ENCODE measurements at regions of chr6 and their contacts with region 1.

Region 1: DNA sequence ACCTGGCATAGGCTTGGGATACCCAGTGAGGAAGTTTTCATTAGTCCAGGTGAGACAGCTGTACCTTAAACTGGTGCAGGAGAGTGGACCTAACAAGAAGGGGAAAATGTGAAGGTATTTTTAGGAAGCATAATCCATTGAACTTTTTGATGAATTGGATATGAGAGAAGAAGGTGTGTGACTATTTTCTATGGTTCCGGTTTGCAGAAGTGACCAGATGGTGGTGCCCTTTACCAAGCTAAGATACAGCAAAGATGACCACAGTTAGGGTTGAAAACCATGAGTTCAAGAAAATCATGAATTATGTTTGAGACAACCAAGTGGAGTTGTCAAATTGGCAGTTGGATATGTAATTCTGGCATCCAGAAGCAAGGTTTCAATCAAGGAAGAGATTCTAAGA is 61.9 kb upstream of the NRSN1 start:
- DNase-seq: no peak
- H3K4me3 ChIP-seq: no peak overlapping the region
- H3K27ac ChIP-seq: peak overlapping the region in 1 of 2 donors; percentile 61
- H3K4me1 ChIP-seq: no peaks in the 10 kb centered on the region
- H3K27me3 ChIP-seq: no peaks in the 10 kb centered on the region
- CTCF ChIP-seq: peak in 2 of 3 experiments; percentile 5 to 6

Region 2: GRCh38 chr6:23964865-23965264 is 99.2 kb before region 1 on chr6:
- intact Hi-C with region 1: no loop called
- DNase-seq: no peak
- H3K4me3 ChIP-seq: no peak overlapping the region
- H3K27ac ChIP-seq: no peak overlapping the region
- H3K4me1 ChIP-seq: no peaks in the 10 kb centered on the region
- H3K27me3 ChIP-seq: no peaks in the 10 kb centered on the region
- CTCF ChIP-seq: no peak

Region 3: GRCh38 chr6:24004103-24005064 is 59.7 kb before region 1 on chr6:
- intact Hi-C with region 1: no loop called
- DNase-seq: peak; percentile 9 to 85
- H3K4me3 ChIP-seq: no peak overlapping the region
- H3K27ac ChIP-seq: peak overlapping the region; percentile 77 to 81
- H3K4me1 ChIP-seq: peaks cover 0 to 14% of the 10 kb centered on the region in 2 donors
- H3K27me3 ChIP-seq: no peaks in the 10 kb centered on the region
- CTCF ChIP-seq: no peak

Region 4: DNA sequence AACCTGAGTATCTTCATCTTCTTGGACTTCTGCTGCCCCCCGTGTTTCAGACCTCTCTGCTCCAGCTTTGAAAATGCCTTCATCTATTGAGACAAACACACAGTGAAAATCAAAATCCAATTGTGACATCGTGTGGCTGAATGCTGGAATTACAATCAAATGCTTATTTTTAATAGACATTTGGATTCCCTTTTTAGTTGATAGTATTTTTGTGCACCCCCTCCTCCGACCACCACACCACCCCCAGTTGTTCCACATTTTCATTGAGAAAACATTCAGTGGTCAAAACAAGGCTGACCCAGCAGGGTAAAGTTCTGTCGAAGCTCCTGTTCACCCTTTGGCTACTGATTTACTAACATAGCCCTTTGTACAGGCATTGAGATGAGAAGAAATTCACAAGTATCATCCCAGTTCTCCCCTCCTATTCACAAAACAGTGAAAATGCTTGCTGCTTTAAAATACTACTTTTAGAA is 141.0 kb after region 1 on chr6:
- intact Hi-C with region 1: loop called (anchors 10 kb)
- DNase-seq: no peak
- H3K4me3 ChIP-seq: no peak overlapping the region
- H3K27ac ChIP-seq: no peak overlapping the region
- H3K4me1 ChIP-seq: no peaks in the 10 kb centered on the region
- H3K27me3 ChIP-seq: no peaks in the 10 kb centered on the region
- CTCF ChIP-seq: peak; percentile 35 to 76 (median 50)

Measured in ascending aorta (tissue), 2 donors.